Left ventricle myocardium superior (tissue), 1 donor: ENCODE measurements at regions of chrX and their contacts with region 1.

Region 1: GRCh38 chrX:12881914-12882313 is 15.0 kb downstream of the TLR7 start:
- DNase-seq: no peak
- ATAC-seq: no peak

Region 2: DNA sequence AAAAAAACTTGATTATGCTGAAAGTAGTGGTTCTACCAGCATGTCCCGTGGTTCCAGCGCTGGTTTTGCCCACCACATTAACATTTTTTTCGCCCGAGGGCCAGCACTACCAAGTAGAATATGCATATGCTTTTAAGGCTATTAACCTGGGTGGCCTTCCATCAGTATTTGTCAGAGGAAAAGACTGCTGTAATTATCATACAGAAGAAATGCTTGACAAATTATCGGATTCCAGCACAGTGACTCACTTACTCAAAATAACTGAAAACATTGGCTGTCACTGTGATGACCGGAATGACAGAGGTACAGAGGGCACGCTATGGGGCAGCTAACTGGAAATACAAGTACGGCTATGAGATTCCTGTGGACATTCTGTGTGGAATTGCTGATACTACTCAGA is 56.1 kb before region 1 on chrX:
- intact Hi-C with region 1: loop called (anchors 10 kb)
- DNase-seq: no peak
- ATAC-seq: no peak